ENCODE measurements at regions of chrX and their contacts with region 1.

Region 1: DNA sequence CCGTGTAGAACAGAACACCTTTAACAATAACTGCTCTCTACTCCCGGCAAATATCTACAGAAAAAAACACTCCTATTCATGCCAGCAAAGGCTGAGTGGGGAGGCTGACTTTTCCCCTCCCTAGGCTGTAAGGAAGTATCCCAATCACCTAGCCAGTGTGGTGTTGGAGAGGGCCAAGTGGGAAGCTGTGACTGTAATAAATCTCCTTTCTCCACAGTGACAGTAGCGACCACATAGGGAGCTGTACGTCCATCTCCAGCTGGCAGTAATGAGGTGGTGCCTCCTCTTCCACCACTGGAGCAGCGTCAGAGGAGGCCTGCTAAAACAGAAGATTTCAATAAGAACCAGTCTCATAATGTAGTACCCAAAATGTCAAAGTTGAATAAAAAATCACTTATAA is 47.9 kb upstream of the PLAC1 start:
- DNase-seq: no peak
- H3K4me3 ChIP-seq: no peak overlapping the region
- H3K27ac ChIP-seq: no peak overlapping the region
- H3K4me1 ChIP-seq: no peaks in the 10 kb centered on the region
- H3K27me3 ChIP-seq: peaks cover 0 to 14% of the 10 kb centered on the region in 2 donors
- CTCF ChIP-seq: no peak
- POLR2A ChIP-seq: no peak

Region 2: GRCh38 chrX:134670134-134670924 is 35.8 kb before region 1 on chrX:
- intact Hi-C with region 1: no loop called
- DNase-seq: peak; percentile 41 to 51
- H3K4me3 ChIP-seq: no peak overlapping the region
- H3K27ac ChIP-seq: no peak overlapping the region
- H3K4me1 ChIP-seq: no peaks in the 10 kb centered on the region
- H3K27me3 ChIP-seq: peaks cover 0 to 36% of the 10 kb centered on the region in 2 donors
- CTCF ChIP-seq: no peak
- POLR2A ChIP-seq: no peak

Region 3: GRCh38 chrX:134718966-134719317 is 12.8 kb after region 1 on chrX:
- intact Hi-C with region 1: loop called (anchors 1 kb)
- DNase-seq: no peak
- H3K4me3 ChIP-seq: no peak overlapping the region
- H3K27ac ChIP-seq: no peak overlapping the region
- H3K4me1 ChIP-seq: no peaks in the 10 kb centered on the region
- H3K27me3 ChIP-seq: peaks cover 0 to 24% of the 10 kb centered on the region in 2 donors
- CTCF ChIP-seq: no peak
- POLR2A ChIP-seq: no peak

Region 4: GRCh38 chrX:134764212-134764785 is 58.2 kb after region 1 on chrX:
- intact Hi-C with region 1: no loop called
- DNase-seq: no peak
- H3K4me3 ChIP-seq: no peak overlapping the region
- H3K27ac ChIP-seq: no peak overlapping the region
- H3K4me1 ChIP-seq: no peaks in the 10 kb centered on the region
- H3K27me3 ChIP-seq: peaks cover 0 to 15% of the 10 kb centered on the region in 2 donors
- CTCF ChIP-seq: no peak
- POLR2A ChIP-seq: no peak

Region 5: GRCh38 chrX:135536877-135537276 is 830.7 kb after region 1 on chrX:
- intact Hi-C with region 1: no loop called
- DNase-seq: no peak
- H3K4me3 ChIP-seq: no peak overlapping the region
- H3K27ac ChIP-seq: no peak overlapping the region
- H3K4me1 ChIP-seq: no peaks in the 10 kb centered on the region
- H3K27me3 ChIP-seq: peaks cover 0 to 9% of the 10 kb centered on the region in 2 donors
- CTCF ChIP-seq: no peak
- POLR2A ChIP-seq: no peak

Measured in breast epithelium (tissue), 4 donors.